Kidney (tissue), 22 donors: ENCODE measurements at regions of chr10 and their contacts with region 1.

Region 1: DNA sequence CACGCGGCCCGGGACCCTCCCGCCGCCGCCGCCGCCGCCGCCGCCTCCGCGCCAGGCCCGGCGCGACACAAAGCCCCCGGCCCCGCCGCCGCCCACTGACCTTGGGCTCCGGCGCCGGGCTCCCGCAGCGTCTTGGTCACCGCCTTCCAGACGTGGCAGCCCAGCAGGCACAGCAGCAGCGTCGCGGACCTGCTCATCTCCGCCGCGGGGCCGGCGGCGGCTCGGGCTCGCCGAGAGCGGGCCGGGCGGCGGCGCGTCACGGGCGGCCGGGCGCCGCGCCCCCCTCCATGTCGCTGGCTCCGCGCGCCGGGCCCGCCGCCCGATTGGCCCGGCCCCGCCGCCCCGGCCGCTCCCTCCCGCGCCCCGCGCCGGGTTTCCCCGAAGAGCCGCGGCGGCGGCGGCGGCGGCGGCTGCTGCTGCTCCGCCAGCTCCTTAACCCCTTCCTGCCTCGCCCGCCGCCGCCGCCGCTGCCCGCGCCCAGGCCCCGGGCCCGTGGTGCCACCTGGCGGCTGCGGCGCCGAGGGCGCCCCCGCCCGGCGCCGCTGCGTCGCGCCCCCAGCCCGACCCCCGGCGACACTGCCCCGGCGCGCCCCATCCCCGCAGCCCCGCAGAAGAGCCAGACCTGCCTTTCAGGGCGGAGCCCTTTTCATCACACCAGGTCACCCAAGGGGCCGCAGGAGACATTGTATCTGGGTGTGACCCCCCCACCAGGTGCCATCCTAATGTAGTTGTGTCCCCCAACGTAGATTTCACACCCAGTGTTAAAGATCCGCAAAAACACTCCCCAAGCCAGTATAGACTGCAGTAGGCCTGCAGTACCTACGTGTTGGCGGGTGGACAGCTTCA is at the start of gene FAM171A1:
- DNase-seq: peak; percentile 73 to 89 (median 80)
- H3K4me3 ChIP-seq: peak within 1 kb of the TSS; percentile 26 to 64 (median 61)
- H3K27ac ChIP-seq: peak within 1 kb of the TSS in 1 of 2 donors; percentile 47
- H3K4me1 ChIP-seq: peaks cover 0 to 5% (median 3%) of the 10 kb centered on the region in 3 donors
- H3K27me3 ChIP-seq: no peaks in the 10 kb centered on the region
- CTCF ChIP-seq: peak; percentile 37
- total RNA-seq, gene FAM171A1: 53.0 TPM

Region 2: GRCh38 chr10:15209827-15210509 is 161.1 kb before region 1 on chr10:
- intact Hi-C with region 1: loop called (anchors 10 kb)
- DNase-seq: peak; percentile 74 to 88 (median 82)
- H3K4me3 ChIP-seq: peak overlapping the region in 2 of 3 donors; percentile 3 to 16
- H3K27ac ChIP-seq: no peak overlapping the region
- H3K4me1 ChIP-seq: peaks cover 0 to 6% (median 0%) of the 10 kb centered on the region in 3 donors
- H3K27me3 ChIP-seq: no peaks in the 10 kb centered on the region
- CTCF ChIP-seq: peak; percentile 84

Region 3: GRCh38 chr10:15262036-15262713 is 108.9 kb before region 1 on chr10:
- intact Hi-C with region 1: loop called (anchors 10 kb)
- DNase-seq: peak in 4 of 5 donors; percentile 29 to 67 (median 50)
- H3K4me3 ChIP-seq: no peak overlapping the region
- H3K27ac ChIP-seq: no peak overlapping the region
- H3K4me1 ChIP-seq: peaks cover 0 to 4% (median 0%) of the 10 kb centered on the region in 3 donors
- H3K27me3 ChIP-seq: no peaks in the 10 kb centered on the region
- CTCF ChIP-seq: peak; percentile 47

Region 4: GRCh38 chr10:15571575-15571974 is 200.5 kb after region 1 on chr10:
- intact Hi-C with region 1: no loop called
- DNase-seq: peak; percentile 40 to 82 (median 71)
- H3K4me3 ChIP-seq: no peak overlapping the region
- H3K27ac ChIP-seq: no peak overlapping the region
- H3K4me1 ChIP-seq: peaks cover 0 to 2% (median 0%) of the 10 kb centered on the region in 3 donors
- H3K27me3 ChIP-seq: no peaks in the 10 kb centered on the region
- CTCF ChIP-seq: no peak